Ascending aorta (tissue), 2 donors: ENCODE measurements at regions of chr7 and their contacts with region 1.

Region 1: GRCh38 chr7:36152756-36153570 is at the start of gene EEPD1:
- DNase-seq: peak; percentile 99 to 100
- H3K4me3 ChIP-seq: peak within 1 kb of the TSS; percentile 94 to 95
- H3K27ac ChIP-seq: peak within 1 kb of the TSS; percentile 81 to 86
- H3K4me1 ChIP-seq: peaks cover 8 to 38% of the 10 kb centered on the region in 2 donors
- H3K27me3 ChIP-seq: no peaks in the 10 kb centered on the region
- CTCF ChIP-seq: no peak
- total RNA-seq, gene EEPD1: 14.0 TPM

Region 2: GRCh38 chr7:35985126-35985754 is 167.7 kb before region 1 on chr7:
- intact Hi-C with region 1: loop called (anchors 2 kb)
- DNase-seq: peak in 1 of 2 donors; percentile 89
- H3K4me3 ChIP-seq: no peak overlapping the region
- H3K27ac ChIP-seq: no peak overlapping the region
- H3K4me1 ChIP-seq: peaks cover 6 to 15% of the 10 kb centered on the region in 2 donors
- H3K27me3 ChIP-seq: no peaks in the 10 kb centered on the region
- CTCF ChIP-seq: peak; percentile 90 to 93 (median 93)

Region 3: GRCh38 chr7:36048141-36048901 is 104.6 kb before region 1 on chr7:
- intact Hi-C with region 1: loop called (anchors 5 kb)
- DNase-seq: peak in 1 of 2 donors; percentile 63
- H3K4me3 ChIP-seq: no peak overlapping the region
- H3K27ac ChIP-seq: peak overlapping the region; percentile 57 to 63
- H3K4me1 ChIP-seq: peaks cover 9 to 38% of the 10 kb centered on the region in 2 donors
- H3K27me3 ChIP-seq: no peaks in the 10 kb centered on the region
- CTCF ChIP-seq: no peak

Region 4: DNA sequence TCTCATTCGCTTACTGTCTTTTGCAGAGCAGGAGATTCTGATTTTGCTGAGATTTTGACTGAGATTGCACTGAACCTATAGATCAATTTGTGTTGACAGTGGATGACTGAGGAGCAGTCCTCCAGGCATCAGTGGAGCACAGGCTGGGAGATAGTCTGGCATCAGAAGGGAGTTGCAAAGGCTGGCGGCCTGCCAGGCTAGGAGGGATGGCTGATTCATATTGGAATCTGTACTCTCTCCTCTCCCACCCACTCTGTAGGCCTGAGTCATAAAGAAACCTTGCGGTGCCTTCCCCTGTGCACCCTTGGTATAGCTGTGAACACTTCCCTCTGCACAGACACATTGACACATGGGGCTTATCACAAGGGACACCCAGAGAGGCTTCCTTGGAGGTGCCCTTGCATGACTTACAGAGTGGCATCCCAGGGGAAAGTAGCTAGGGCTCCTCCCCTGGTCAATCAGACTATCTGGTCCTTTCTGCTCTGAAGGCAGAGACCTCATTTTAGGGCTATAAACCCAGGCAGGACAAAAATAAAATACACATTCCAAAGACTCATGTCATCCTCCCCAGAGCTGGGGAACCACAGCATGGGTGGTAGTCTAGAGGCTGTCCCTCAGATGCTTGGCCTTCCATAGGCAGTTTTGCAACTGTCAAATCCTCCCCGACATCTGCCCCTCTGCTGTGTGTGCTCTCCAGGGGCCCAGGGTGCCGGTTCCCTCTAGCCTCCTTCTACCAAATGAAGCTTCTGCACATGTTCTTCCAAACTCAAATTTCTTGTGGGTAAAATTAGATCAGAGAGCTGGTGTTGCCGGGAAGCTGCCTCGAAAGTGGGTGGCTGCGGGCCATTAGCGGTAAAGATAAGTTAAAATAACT is 37.3 kb before region 1 on chr7:
- intact Hi-C with region 1: loop called (anchors 2 kb)
- DNase-seq: peak; percentile 21 to 91
- H3K4me3 ChIP-seq: peak overlapping the region in 1 of 2 donors; percentile 6
- H3K27ac ChIP-seq: peak overlapping the region; percentile 78 to 82
- H3K4me1 ChIP-seq: peaks cover 24 to 45% of the 10 kb centered on the region in 2 donors
- H3K27me3 ChIP-seq: no peaks in the 10 kb centered on the region
- CTCF ChIP-seq: no peak

Region 5: DNA sequence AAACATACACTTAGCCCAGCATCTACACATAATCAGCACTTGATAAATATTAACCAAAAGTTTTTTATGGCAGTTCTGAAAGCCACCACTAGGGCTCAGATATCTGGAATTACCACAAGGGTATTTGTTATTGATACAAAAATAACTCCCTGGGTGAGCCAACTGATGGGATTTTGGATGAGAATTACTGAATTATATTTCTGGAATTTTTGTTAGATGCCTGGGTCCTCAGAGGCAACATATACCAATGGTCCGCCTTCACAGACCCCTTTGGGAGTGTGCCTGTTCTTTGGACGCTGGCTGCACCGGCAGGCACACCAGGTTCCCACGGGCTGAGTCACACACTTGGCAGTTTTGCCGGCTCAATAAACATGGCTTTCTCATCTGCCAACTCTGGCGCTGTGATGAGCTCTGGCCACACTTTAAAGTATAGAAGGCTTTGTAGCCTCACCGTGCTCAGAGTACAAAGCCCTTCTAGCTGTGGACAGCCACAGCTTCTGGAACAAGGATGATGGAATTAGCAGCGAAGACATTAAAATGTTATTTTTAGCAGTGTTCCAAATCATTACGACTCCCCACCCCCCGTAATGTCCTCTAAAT is 24.4 kb before region 1 on chr7:
- intact Hi-C with region 1: loop called (anchors 2 kb)
- DNase-seq: peak; percentile 59 to 93
- H3K4me3 ChIP-seq: peak overlapping the region in 1 of 2 donors; percentile 14
- H3K27ac ChIP-seq: peak overlapping the region; percentile 66 to 72
- H3K4me1 ChIP-seq: peaks cover 6 to 15% of the 10 kb centered on the region in 2 donors
- H3K27me3 ChIP-seq: no peaks in the 10 kb centered on the region
- CTCF ChIP-seq: peak; percentile 70 to 79 (median 73)

Region 6: DNA sequence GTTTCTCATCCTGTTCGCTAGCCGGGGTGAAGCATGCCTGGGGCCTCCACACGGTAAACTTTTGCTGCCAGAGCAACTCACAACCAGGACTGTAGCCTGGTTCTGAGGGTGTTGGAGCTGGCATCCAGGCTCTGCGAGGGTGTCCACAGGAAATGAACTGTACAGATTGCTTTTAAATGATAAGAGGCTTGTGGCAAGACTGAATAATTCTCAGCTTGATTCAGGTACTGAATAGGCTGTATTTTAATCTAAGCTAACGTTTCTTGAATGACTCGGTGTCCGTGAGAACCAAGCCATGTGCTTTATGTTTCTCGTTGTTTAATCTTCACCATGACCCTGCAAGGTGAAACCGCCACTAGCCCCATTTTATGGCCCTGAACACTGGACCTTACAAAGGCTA is 49.4 kb after region 1 on chr7:
- intact Hi-C with region 1: loop called (anchors 5 kb)
- DNase-seq: no peak
- H3K4me3 ChIP-seq: no peak overlapping the region
- H3K27ac ChIP-seq: peak overlapping the region; percentile 33 to 37
- H3K4me1 ChIP-seq: peaks cover 3 to 8% of the 10 kb centered on the region in 2 donors
- H3K27me3 ChIP-seq: no peaks in the 10 kb centered on the region
- CTCF ChIP-seq: no peak

Region 7: GRCh38 chr7:36232971-36233550 is 80.1 kb after region 1 on chr7:
- intact Hi-C with region 1: no loop called
- DNase-seq: no peak
- H3K4me3 ChIP-seq: no peak overlapping the region
- H3K27ac ChIP-seq: peak overlapping the region; percentile 59 to 73
- H3K4me1 ChIP-seq: peaks cover 10 to 18% of the 10 kb centered on the region in 2 donors
- H3K27me3 ChIP-seq: no peaks in the 10 kb centered on the region
- CTCF ChIP-seq: no peak